GM18951 (cell line): ENCODE measurements at regions of chr10 and their contacts with region 1.

Region 1: DNA sequence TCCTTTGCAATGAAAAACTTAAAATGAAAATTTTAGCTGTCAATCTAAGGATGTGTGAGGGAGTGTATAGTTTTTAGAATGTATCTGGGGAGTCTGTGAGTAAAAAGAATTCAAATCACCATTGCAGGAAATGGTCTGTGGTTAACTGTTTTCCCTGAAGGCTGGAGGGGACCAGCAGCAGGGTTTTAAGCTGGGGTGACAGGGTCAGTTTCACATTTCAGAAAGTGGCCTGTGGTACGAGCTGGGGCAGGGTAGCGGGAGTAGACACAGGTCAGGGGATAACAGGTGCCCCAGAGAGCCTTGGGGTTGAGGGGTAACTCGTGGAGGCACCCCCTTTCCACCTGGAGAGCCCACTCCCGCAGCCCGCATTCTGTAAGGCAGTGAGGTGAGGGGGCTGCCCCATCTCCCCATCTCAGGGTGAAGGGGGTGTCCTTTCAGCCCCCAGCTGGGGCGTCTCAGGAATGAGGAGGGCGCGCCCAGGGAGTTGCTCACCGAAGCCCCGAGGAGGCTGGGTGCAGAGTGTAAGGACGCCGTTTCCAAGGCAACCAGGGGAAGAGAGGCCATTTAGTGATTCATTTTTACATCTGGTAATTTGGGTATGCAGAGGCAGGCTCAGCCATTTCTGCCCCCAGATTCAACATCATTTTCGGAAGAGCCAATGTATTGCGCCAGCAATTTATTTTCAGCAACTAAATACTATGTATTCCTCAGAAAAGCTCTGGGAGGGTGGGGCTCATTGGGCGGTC is 168.9 kb downstream of the SLIT1 start:
- POLR2A ChIP-seq: no peak

Region 2: DNA sequence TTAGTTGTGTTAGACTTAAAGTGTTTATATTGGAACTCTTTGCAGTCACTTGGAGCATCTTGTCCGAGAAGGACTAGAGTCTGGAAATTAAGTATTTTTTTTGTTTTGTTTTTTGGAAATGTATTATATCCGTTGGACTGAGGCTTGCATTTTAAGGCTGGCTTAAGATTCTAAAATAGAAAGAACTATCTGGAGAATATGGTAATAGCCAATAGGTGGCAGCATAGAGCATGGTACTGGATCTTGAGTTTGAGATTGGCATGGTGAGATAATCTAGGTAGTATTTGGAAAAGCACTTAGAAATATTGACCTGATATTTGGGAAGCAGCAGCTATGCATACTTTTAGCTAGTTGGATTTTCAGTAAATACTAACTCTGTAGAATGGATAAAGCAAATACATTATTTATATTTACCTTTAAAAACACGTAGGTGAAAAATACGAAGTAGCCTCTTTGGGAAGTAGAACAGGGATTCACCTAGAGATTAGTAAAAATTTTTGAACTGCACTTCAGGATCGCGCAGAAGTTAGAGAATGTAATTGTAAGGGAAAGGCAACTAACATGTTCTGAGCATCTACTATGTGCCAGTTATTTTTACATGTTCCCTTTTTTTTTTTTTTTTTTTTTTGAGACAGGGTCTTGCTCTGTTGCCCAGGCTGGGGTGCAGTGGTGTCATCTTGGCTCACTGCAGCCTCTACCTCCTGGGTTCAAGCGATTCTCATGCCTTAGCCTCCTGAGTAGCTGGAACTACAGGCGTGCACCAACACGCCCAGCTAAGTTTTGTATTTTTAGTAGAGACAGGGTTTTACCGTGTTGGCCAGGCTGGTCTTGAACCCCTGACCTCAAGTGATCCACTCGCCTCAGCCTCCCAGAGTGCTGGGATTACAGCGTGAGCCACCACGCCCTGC is 106.2 kb before region 1 on chr10:
- in situ Hi-C with region 1: loop called (anchors 10 kb)
- POLR2A ChIP-seq: no peak